ENCODE measurements at regions of chr22 and their contacts with region 1.

Region 1: DNA sequence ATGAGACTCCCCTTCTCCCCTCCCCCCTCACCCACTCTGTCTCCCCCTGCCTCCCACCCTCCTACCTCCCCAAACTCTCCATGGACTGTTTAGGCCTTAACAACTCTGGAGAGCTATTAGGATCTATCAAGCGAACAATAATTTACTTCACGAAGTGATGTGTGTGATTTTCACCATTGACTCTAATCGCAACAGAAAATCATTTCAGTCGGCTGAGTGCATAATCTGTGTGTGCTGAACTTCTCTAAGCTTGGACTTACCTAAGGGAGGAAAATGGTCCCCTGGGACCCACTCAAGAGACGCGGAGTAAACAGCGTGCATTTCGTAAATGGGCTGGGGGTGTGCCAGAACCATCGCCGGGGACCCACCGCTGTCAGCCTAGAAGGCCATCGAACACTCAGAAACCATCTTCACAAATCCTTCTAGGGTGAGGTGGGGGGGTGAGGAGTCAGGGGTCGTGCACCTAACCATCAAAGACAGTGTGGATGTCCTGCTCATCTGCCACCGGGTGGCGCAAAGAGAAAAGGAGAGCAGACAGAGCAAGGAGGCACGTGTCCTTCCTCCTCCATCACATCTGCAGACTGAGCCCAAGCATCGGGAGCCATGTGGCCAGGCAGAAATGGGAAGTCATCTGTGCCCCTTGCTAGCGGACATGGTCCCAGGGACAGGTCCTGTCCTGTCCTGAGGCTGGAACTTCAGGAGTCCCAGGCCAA is 62.1 kb upstream of the NUP50 start:
- DNase-seq: peak in 4 of 5 donors; percentile 44 to 60 (median 50)
- ATAC-seq: peak; percentile 51 to 80 (median 59)
- H3K4me3 ChIP-seq: no peak overlapping the region
- H3K27ac ChIP-seq: no peak overlapping the region
- H3K4me1 ChIP-seq: no peaks in the 10 kb centered on the region
- H3K27me3 ChIP-seq: peaks cover 0 to 70% (median 21%) of the 10 kb centered on the region in 9 donors
- CTCF ChIP-seq: peak in 7 of 12 donors; percentile 19 to 47 (median 25)
- POLR2A ChIP-seq: no peak

Region 2: GRCh38 chr22:45429981-45430775 is 328.5 kb after region 1 on chr22:
- intact Hi-C with region 1: loop called in 1 of 10 experiments (anchors 5 kb)
- DNase-seq: no peak
- ATAC-seq: no peak
- H3K4me3 ChIP-seq: no peak overlapping the region
- H3K27ac ChIP-seq: no peak overlapping the region
- H3K4me1 ChIP-seq: peaks cover 0 to 6% (median under 1%) of the 10 kb centered on the region in 12 donors
- H3K27me3 ChIP-seq: peaks cover 0 to 4% (median 0%) of the 10 kb centered on the region in 9 donors
- CTCF ChIP-seq: no peak
- POLR2A ChIP-seq: no peak

Measured in heart left ventricle (tissue), 16 donors.